Calu3 (cell line): ENCODE measurements at regions of chr7 and their contacts with region 1.

Region 1: DNA sequence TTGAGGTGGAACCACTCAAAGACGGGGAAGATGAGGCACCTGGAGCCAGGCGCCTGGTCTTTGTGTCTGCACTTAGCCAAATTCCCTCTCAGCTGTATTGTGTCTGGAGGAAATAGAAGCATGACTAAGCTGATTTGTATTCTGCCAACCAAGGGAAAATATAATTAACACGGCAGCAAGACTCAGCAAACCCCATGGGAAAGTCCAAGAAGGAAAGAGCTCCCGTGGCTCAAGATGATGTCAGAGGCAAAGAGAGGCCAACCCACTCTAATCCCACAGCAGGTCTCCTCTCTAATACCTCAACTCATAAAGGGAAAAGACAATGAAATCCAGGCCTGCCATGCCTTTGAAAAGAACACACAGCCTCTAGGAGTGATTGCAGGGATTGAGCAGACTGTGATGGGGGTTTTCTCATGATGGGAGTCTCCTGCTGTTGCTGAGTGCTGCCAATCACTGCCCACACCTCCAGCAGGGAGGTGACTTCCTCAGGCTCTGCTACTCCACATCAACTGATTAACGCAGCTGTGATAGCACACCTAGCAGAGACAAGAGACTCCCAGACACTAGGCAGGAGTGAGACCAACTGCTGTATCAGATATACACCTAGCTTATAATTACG is 255.5 kb upstream of the C7orf33 start:
- DNase-seq: peak; percentile 15
- H3K4me3 Mint-ChIP-seq: no peak overlapping the region
- H3K27ac Mint-ChIP-seq: no peak overlapping the region
- H3K4me1 Mint-ChIP-seq: peaks cover 13% of the 10 kb centered on the region
- H3K27me3 Mint-ChIP-seq: peaks cover 59% of the 10 kb centered on the region
- CTCF ChIP-seq: no peak

Region 2: GRCh38 chr7:148262721-148263229 is 72.3 kb before region 1 on chr7:
- CTCF ChIA-PET with region 1: no interaction called
- intact Hi-C with region 1: no loop called
- DNase-seq: peak; percentile 73
- H3K4me3 Mint-ChIP-seq: no peak overlapping the region
- H3K27ac Mint-ChIP-seq: no peak overlapping the region
- H3K4me1 Mint-ChIP-seq: peaks cover 10% of the 10 kb centered on the region
- H3K27me3 Mint-ChIP-seq: peaks cover 48% of the 10 kb centered on the region
- CTCF ChIP-seq: peak; percentile 90

Region 3: DNA sequence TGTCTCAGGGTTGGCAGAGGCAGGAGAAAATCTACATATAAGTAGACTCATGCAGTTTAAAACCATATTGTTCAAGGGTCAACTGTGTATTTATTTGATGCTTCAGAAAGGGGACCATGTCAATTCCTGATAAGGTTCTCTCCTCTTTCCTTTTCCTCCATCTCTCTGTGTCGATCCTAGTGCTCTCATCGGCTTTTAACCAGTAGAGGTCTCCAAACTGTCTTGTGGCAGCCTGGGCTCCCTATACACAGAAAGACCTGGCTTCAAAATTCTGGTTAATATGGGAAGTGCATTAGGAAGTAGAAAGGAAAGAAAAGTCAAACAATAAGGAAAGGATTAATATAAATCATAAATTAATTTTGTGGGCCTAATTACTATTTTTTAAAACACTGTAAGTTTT is 48.9 kb before region 1 on chr7:
- CTCF ChIA-PET with region 1: interaction called, 6 read pairs
- intact Hi-C with region 1: loop called (anchors 5 kb)
- DNase-seq: peak; percentile 29
- H3K4me3 Mint-ChIP-seq: no peak overlapping the region
- H3K27ac Mint-ChIP-seq: no peak overlapping the region
- H3K4me1 Mint-ChIP-seq: no peaks in the 10 kb centered on the region
- H3K27me3 Mint-ChIP-seq: peaks cover 14% of the 10 kb centered on the region
- CTCF ChIP-seq: no peak

Region 4: GRCh38 chr7:148303295-148304082 is 31.6 kb before region 1 on chr7:
- CTCF ChIA-PET with region 1: no interaction called
- intact Hi-C with region 1: loop called (anchors 5 kb)
- DNase-seq: no peak
- H3K4me3 Mint-ChIP-seq: no peak overlapping the region
- H3K27ac Mint-ChIP-seq: no peak overlapping the region
- H3K4me1 Mint-ChIP-seq: no peaks in the 10 kb centered on the region
- H3K27me3 Mint-ChIP-seq: peaks cover 23% of the 10 kb centered on the region
- CTCF ChIP-seq: no peak

Region 5: GRCh38 chr7:148383651-148384050 is 48.6 kb after region 1 on chr7:
- CTCF ChIA-PET with region 1: no interaction called
- intact Hi-C with region 1: loop called (anchors 1 kb)
- DNase-seq: no peak
- H3K4me3 Mint-ChIP-seq: no peak overlapping the region
- H3K27ac Mint-ChIP-seq: no peak overlapping the region
- H3K4me1 Mint-ChIP-seq: no peaks in the 10 kb centered on the region
- H3K27me3 Mint-ChIP-seq: peaks cover 32% of the 10 kb centered on the region
- CTCF ChIP-seq: no peak

Region 6: DNA sequence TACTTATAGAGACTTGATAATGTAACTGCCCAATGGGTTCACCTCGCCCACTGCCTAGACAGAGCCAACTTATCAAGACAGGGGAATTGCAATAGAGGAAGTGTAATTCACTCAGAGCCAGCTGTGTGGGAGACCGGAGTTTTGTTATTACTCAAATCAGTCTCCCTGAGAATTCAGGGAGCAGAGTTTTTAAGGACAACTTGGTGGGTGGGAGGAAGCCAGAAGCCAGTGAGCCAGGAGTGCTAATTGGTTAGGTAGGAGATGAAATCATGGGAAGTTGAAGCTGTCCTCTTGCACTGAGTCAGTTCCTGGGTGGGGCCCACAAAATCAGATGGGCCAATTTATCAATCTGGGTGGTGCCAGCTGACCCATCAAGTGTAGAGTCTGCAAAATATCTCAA is 235.4 kb after region 1 on chr7:
- CTCF ChIA-PET with region 1: no interaction called
- intact Hi-C with region 1: no loop called
- DNase-seq: no peak
- H3K4me3 Mint-ChIP-seq: no peak overlapping the region
- H3K27ac Mint-ChIP-seq: no peak overlapping the region
- H3K4me1 Mint-ChIP-seq: peaks cover 13% of the 10 kb centered on the region
- H3K27me3 Mint-ChIP-seq: no peaks in the 10 kb centered on the region
- CTCF ChIP-seq: no peak